IMR-90 (cell line): ENCODE measurements at regions of chr18 and their contacts with region 1.

Region 1: GRCh38 chr18:43620936-43621335 is 343.6 kb upstream of the SYT4 start:
- DNase-seq: peak; percentile 5
- ATAC-seq: peak; percentile 72
- H3K4me3 ChIP-seq: no peak overlapping the region
- H3K27ac ChIP-seq: no peak overlapping the region
- H3K4me1 ChIP-seq: no peaks in the 10 kb centered on the region
- H3K27me3 ChIP-seq: no peaks in the 10 kb centered on the region
- CTCF ChIP-seq: peak; percentile 66
- POLR2A ChIP-seq: no peak
- RAD21 ChIP-seq: peak; percentile 78

Region 2: GRCh38 chr18:44025421-44025820 is 404.5 kb after region 1 on chr18:
- CTCF ChIA-PET with region 1: no interaction called
- POLR2A ChIA-PET with region 1: no interaction called
- dilution Hi-C with region 1: no loop called
- in situ Hi-C with region 1: no loop called
- intact Hi-C with region 1: loop called (anchors 5 kb)
- DNase-seq: no peak
- ATAC-seq: no peak
- H3K4me3 ChIP-seq: no peak overlapping the region
- H3K27ac ChIP-seq: no peak overlapping the region
- H3K4me1 ChIP-seq: no peaks in the 10 kb centered on the region
- H3K27me3 ChIP-seq: no peaks in the 10 kb centered on the region
- CTCF ChIP-seq: no peak
- POLR2A ChIP-seq: no peak
- RAD21 ChIP-seq: no peak

Region 3: GRCh38 chr18:44325903-44326635 is 705.1 kb after region 1 on chr18:
- CTCF ChIA-PET with region 1: interaction called, 5 read pairs
- POLR2A ChIA-PET with region 1: no interaction called
- dilution Hi-C with region 1: no loop called
- in situ Hi-C with region 1: loop called (anchors 25 kb)
- intact Hi-C with region 1: loop called (anchors 1 kb)
- DNase-seq: peak; percentile 61
- ATAC-seq: no peak
- H3K4me3 ChIP-seq: no peak overlapping the region
- H3K27ac ChIP-seq: no peak overlapping the region
- H3K4me1 ChIP-seq: no peaks in the 10 kb centered on the region
- H3K27me3 ChIP-seq: no peaks in the 10 kb centered on the region
- CTCF ChIP-seq: 0 out of 2 replicates have a peak, but pooled peaks have one; percentile 30
- POLR2A ChIP-seq: no peak
- RAD21 ChIP-seq: 0 out of 2 replicates have a peak, but pooled peaks have one; percentile 27

Region 4: DNA sequence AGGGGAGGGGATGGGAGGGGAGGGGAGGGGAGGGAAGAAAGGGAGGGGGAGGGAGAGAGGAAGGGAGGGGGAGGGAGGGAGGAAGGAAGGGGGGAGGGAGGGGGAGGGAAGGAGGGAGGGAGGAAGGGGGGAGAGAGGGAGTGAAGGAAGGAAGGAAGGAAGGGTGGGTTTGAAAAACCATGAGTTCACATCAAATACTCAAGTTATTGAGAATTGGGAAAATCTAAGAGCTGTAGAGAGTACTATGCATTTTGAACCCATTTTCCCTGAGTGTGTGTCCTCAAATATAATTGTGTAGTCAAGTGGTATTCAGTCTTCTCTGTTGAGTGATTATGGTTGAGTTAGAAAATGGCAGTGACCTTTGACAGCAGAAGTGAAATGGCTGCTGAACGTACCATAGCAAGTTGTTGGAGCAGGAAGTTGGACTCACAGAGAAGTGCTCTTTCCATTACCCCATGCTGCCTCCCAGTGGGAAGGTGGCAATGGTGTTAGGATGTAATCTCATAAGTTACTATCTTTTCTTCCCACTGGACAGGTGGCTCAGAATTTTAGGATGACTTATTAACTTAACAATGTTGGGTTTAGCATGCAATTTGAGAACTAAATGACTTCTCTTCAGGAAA is 1274.4 kb after region 1 on chr18:
- CTCF ChIA-PET with region 1: no interaction called
- POLR2A ChIA-PET with region 1: no interaction called
- dilution Hi-C with region 1: no loop called
- in situ Hi-C with region 1: no loop called
- intact Hi-C with region 1: loop called (anchors 5 kb)
- DNase-seq: peak; percentile 45
- ATAC-seq: no peak
- H3K4me3 ChIP-seq: no peak overlapping the region
- H3K27ac ChIP-seq: no peak overlapping the region
- H3K4me1 ChIP-seq: no peaks in the 10 kb centered on the region
- H3K27me3 ChIP-seq: no peaks in the 10 kb centered on the region
- CTCF ChIP-seq: peak; percentile 50
- POLR2A ChIP-seq: no peak
- RAD21 ChIP-seq: peak; percentile 60

Region 5: GRCh38 chr18:45384137-45384961 is 1763.4 kb after region 1 on chr18:
- CTCF ChIA-PET with region 1: no interaction called
- POLR2A ChIA-PET with region 1: no interaction called
- dilution Hi-C with region 1: no loop called
- in situ Hi-C with region 1: loop called (anchors 25 kb)
- intact Hi-C with region 1: loop called (anchors 5 kb)
- DNase-seq: peak; percentile 35
- ATAC-seq: peak; percentile 70
- H3K4me3 ChIP-seq: no peak overlapping the region
- H3K27ac ChIP-seq: no peak overlapping the region
- H3K4me1 ChIP-seq: no peaks in the 10 kb centered on the region; the same call in 1 of the 2 replicates
- H3K27me3 ChIP-seq: peaks cover 7% of the 10 kb centered on the region; the same call in 1 of the 2 replicates
- CTCF ChIP-seq: peak; percentile 56
- POLR2A ChIP-seq: no peak
- RAD21 ChIP-seq: peak; percentile 57